ENCODE measurements at regions of chr11 and their contacts with region 1.

Region 1: DNA sequence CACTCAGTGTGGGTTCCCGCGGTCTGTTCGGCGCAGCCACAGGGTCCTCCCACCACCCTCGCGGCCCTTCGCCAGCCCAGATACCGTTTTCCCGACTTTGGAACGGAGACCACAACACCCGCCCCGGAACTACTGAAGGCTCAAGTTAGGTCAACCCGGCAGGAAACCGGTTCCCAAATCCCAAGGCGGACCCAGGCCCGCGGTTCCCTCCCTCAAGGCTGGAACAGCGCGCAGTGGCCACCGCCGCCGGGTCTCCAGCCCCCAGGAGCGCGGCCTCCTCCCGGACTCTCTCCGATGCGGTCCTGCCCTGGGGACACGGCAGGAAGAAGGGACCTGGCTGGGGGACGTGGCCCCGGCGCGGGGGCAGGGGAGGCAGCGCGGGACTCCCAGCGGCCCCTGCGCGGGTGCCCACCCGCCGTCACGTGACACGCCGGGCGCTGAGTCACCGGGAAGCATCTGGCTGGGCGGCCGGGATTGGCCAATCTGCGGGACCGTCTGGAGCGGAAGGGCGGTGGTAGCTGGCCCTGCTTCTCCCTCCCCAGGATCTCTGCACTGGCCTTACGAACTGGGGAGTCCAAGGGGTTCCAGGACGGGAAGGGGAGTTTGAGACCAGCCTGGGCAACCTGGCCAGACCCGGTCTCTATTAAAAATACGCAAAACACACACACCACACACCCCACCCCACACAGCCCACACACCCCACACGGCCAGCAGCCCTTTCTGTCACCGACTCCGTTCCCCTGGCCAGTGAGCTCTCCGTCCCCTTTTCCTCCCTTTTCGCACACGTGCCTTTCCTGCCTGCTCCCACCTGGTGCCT is 21.5 kb upstream of the MALAT1 start:
- DNase-seq: peak; percentile 97 to 98
- ATAC-seq: peak; percentile 59 to 60
- H3K4me3 ChIP-seq: peak overlapping the region; percentile 79 to 88 (median 84)
- H3K27ac ChIP-seq: peak overlapping the region; percentile 97 to 100 (median 98)
- H3K4me1 ChIP-seq: peaks cover 61 to 67% of the 10 kb centered on the region in 2 donors
- H3K27me3 ChIP-seq: no peaks in the 10 kb centered on the region
- CTCF ChIP-seq: peak in 2 of 5 experiments; percentile 38 to 65
- POLR2A ChIP-seq: peak; percentile 97 to 99

Region 2: DNA sequence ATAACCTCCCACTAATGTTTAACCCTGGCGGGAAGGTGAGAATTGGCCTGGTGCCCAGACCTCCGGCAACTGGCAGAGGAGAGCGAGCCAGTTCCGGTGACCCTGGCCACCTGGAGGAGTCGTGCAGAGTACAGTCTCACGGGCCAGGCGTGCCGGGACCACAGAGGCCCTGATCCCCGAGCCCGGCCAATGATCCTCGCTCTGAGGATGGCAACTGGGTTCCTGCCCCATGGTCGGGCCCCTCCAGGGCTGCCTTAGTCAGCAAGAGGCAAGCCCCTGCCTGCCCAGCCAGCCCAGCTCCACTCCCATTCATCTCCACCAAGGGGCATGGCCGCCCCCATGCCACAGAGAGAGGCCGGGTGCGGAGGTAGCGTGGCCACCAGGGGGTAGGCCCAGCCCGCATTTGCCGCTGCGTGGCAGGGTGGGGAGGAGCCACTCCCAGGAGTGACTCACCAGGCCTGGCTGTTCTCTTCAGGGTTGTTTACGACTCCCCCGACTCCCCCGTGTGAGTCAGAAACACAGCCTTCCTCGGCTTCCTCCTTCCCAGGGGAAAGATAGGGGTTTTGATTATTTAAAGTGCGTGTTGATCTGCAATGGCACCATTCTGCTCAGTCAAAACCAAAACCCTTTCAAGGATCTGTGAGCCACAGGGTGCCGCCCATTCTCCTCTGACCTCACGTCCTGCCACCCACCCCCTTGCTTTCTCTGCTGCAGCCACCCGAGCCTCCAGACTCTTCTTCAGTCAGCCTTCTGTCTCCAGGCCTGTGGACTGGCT is 95.1 kb before region 1 on chr11 and contains the start of gene SLC25A45:
- in situ Hi-C with region 1: no loop called
- intact Hi-C with region 1: loop called (anchors 1 kb)
- DNase-seq: peak; percentile 95 to 96
- ATAC-seq: peak; percentile 80 to 86
- H3K4me3 ChIP-seq: peak within 1 kb of the TSS; percentile 46 to 63 (median 54)
- H3K27ac ChIP-seq: peak within 1 kb of the TSS; percentile 96 to 100 (median 98)
- H3K4me1 ChIP-seq: peaks cover 46 to 51% of the 10 kb centered on the region in 2 donors
- H3K27me3 ChIP-seq: no peaks in the 10 kb centered on the region
- CTCF ChIP-seq: peak; percentile 93 to 99 (median 96)
- POLR2A ChIP-seq: peak; percentile 62 to 89
- total RNA-seq, gene SLC25A45: 2.6 to 12.4 (median 5.6) TPM

Region 3: DNA sequence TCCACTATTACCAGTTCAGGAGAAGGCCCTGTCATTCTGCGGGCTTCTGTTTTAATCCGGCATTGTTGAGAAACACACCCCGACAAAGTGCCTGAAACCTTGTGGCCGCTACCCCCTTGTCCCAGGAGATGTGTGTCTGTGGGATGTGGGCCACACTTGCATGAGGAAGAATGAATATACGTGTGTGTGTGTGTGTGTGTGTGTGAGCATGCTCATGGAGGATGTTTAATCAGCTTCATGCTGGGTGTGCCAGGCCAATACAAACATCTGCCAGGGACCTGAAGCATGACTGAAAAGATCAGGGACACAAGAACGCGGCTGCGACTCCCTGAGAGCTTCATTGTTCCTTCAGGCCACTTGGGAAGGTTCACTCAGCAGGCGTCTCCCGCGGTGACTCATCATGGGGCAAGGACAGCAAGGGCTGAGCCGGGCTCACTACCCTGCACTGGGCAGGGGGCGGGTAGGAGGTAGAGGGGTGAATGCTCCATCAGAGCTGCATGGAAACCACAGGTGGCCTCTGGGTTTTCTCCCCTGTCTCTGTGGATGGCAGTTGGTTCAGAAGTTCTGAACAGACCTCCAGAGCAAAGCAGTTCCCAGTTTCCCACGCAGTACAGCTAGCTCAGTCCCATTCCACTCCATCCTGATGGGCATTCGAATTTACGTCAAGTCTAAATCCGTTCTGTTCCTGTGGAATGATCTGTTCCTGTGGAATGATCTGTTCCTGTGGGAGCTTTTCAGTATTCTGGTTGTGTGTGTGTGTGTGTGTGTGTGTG is 14.4 kb after region 1 on chr11:
- in situ Hi-C with region 1: no loop called
- intact Hi-C with region 1: loop called (anchors 1 kb)
- DNase-seq: peak; percentile 85 to 94
- ATAC-seq: peak; percentile 32 to 45
- H3K4me3 ChIP-seq: peak overlapping the region in 2 of 4 donors; percentile 21 to 33
- H3K27ac ChIP-seq: peak overlapping the region; percentile 93 to 99 (median 94)
- H3K4me1 ChIP-seq: peaks cover 92 to 96% of the 10 kb centered on the region in 2 donors
- H3K27me3 ChIP-seq: no peaks in the 10 kb centered on the region
- CTCF ChIP-seq: no peak
- POLR2A ChIP-seq: peak in 1 of 2 donors; percentile 75

Region 4: GRCh38 chr11:65497141-65498041 is 20.0 kb after region 1 on chr11:
- in situ Hi-C with region 1: no loop called
- intact Hi-C with region 1: loop called (anchors 1 kb)
- DNase-seq: peak; percentile 98 to 99
- ATAC-seq: peak; percentile 51 to 57
- H3K4me3 ChIP-seq: peak overlapping the region; percentile 81 to 93 (median 91)
- H3K27ac ChIP-seq: peak overlapping the region; percentile 93 to 99 (median 96)
- H3K4me1 ChIP-seq: peaks cover 43 to 47% of the 10 kb centered on the region in 2 donors
- H3K27me3 ChIP-seq: no peaks in the 10 kb centered on the region
- CTCF ChIP-seq: peak in 1 of 5 experiments; percentile 46
- POLR2A ChIP-seq: peak in 1 of 2 donors; percentile 96